Activated CD4-positive, alpha-beta T cell treated with anti-CD3 and anti-CD28 coated beads, Interleukin-2, amount 10 ng/mL, durations not matched to agents 24 days and 14 days (primary cell): ENCODE measurements at regions of chr3 and their contacts with region 1.

Region 1: DNA sequence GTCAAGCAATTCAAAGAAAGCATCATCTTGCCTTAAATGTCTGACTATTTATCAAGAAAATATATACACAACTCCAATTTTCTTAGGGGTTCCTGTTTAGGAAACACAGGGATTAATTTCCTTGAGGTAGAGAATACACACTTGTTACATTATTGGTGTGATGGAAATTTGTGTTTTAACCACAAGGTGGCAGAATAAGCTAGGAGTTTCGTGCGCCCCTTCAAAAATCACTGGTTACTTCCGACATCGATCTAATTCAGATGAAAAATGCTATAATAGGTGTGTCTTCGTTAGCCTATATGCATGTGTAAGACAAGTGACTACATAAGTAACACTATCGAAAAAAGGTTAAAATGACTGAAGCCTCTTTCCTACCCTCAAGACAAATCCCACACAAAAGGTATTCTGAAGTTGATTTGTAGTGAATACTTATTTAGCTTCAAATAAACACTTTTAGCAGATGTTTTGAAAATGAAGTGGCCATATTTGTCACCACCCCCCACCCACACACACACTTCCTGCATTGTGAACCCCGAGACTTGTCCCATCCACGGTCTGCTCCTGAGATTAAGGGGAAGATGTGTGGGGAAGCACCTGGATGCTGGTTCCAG is 246.5 kb downstream of the ROBO1 start:
- DNase-seq: peak; percentile 52
- H3K4me3 Mint-ChIP-seq: no peak overlapping the region
- H3K27ac Mint-ChIP-seq: no peak overlapping the region
- H3K4me1 Mint-ChIP-seq: no peaks in the 10 kb centered on the region
- H3K27me3 Mint-ChIP-seq: no peaks in the 10 kb centered on the region

Region 2: DNA sequence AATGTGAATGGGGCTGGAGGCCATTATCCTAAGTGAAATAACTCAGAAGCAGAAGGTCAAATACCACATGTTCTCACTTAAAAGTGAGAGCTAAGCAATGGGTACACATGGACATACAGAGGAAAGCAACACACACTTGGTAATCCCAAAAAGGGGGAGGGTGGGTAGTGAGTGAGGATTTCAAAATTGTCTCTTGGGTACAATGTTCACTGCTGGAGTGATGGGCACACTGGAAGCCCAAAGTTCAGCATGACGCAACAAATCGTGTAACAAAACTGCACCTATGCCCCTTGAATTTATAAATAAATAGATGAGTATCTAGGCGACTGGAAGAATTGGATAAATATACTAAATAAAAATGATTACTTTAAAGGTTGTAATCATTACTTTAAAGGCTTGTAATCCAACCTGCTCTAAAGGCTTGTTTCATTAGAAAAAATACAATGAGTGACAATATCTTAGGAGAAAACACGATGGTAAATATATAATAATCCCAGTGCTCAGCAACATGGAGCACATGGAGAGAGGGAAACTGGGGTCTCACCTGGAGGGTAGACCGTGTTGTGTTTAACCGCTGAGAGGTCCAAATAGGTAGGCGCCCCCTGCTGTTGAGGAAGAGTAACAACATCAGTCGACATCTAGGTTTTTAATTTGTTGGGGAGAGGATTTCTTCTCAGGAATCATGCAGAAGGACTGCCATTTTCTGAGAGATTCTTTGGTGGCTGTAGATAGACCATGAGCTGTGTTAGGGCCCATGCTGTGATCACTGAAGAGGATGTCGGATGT is 325.0 kb after region 1 on chr3:
- intact Hi-C with region 1: loop called (anchors 5 kb)
- DNase-seq: no peak
- H3K4me3 Mint-ChIP-seq: no peak overlapping the region
- H3K27ac Mint-ChIP-seq: no peak overlapping the region
- H3K4me1 Mint-ChIP-seq: no peaks in the 10 kb centered on the region
- H3K27me3 Mint-ChIP-seq: no peaks in the 10 kb centered on the region

Region 3: DNA sequence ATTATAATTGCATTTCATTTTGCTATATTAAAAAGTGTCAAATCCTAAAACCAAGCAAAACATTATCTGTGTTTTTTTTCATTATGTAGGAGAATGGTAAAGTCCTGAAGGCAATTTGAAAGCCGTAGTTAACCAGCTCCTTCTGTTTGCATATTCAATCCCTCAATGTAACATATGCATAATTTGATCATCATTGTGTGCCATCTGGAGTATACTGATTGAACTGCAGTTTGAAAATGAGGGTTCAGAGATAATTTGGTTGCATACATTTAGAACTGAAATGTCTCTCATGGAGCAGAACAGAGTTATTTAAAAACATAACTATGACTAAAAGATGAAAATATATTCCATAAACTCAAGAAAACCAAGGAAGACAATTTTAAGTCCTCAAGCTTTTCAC is 1721.5 kb after region 1 on chr3:
- intact Hi-C with region 1: loop called (anchors 5 kb)
- DNase-seq: no peak
- H3K4me3 Mint-ChIP-seq: no peak overlapping the region
- H3K27ac Mint-ChIP-seq: no peak overlapping the region
- H3K4me1 Mint-ChIP-seq: no peaks in the 10 kb centered on the region
- H3K27me3 Mint-ChIP-seq: no peaks in the 10 kb centered on the region